ENCODE measurements at regions of chr3 and their contacts with region 1.

Region 1: DNA sequence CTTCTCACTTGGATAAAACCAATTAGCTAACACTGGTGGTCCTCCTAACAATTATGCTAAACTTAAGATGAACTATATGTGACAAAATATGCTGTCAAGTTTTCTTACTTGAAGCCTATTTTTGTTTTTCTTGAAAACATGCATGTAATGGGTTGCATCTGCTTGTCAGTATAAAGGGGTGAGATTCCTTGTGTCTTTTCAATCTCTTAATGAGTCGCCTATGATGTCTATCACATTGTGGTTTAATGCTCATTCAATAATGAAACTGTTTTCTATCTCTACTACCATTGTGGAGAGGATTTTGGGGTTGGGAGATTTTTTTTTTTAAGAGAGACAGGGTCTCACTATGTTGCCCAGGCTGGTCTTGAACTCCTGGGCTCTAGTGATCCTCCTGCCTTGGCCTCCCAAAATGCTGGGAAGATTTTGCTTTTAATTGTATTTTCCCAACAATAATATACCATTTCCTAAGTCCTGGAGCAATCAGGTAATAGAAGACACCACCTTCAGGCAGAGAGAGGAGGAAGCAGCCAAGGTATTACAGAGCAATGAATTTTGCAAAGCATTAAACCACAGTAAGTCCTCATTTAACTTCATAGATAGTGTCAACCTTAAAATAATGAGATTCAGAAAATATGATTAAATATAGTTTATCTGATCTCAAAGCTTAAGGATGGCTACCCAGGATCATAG is 17.4 kb upstream of the TRMT10C start:
- DNase-seq: no peak
- H3K4me3 Mint-ChIP-seq: no peak overlapping the region
- H3K27ac Mint-ChIP-seq: peak overlapping the region; percentile 56
- H3K4me1 Mint-ChIP-seq: peaks cover 33% of the 10 kb centered on the region
- H3K27me3 Mint-ChIP-seq: no peaks in the 10 kb centered on the region

Region 2: DNA sequence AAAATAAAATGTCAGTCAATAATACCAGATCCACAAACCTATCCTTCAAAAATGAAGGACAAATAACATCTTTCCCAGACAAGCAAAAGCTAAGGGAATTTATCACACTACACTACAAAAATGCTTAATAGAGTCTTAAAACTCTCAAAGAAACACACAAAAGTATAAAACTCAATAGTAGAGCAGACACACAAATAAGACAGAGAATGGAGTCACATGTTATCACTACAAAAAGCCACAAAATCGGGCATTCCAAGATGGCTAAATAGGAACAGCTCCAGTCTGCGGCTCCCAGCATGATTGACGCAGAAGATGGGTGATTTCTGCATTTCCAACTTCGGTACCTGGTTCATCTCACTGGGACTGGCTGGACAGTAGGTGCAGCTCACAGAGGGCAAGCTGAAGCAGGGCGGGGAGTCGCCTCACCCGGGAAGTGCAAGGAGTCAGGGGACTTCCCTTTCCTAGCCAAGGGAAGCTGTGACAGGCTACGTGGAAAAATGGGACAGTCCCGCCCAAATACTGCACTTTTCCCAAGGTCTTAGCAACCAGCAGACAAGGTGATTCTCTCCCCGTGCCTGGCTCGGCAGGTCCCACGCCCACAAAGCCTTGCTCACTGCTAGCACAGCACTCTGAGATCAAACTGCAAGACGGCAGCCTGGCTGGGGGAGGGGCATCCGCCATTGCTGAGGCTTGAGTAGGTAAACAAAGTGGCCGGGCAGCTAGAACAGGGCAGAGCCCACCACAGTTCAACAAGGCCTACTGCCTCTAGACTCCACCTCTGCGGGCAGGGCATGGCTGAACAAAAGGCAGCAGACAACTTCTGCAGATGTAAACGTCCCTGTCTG is 77.6 kb before region 1 on chr3:
- CTCF ChIA-PET with region 1: no interaction called
- POLR2A ChIA-PET with region 1: no interaction called
- intact Hi-C with region 1: loop called (anchors 5 kb)
- DNase-seq: peak; percentile 86
- H3K4me3 Mint-ChIP-seq: peak overlapping the region; percentile 74
- H3K27ac Mint-ChIP-seq: peak overlapping the region; percentile 84
- H3K4me1 Mint-ChIP-seq: peaks cover 51% of the 10 kb centered on the region
- H3K27me3 Mint-ChIP-seq: no peaks in the 10 kb centered on the region

Region 3: DNA sequence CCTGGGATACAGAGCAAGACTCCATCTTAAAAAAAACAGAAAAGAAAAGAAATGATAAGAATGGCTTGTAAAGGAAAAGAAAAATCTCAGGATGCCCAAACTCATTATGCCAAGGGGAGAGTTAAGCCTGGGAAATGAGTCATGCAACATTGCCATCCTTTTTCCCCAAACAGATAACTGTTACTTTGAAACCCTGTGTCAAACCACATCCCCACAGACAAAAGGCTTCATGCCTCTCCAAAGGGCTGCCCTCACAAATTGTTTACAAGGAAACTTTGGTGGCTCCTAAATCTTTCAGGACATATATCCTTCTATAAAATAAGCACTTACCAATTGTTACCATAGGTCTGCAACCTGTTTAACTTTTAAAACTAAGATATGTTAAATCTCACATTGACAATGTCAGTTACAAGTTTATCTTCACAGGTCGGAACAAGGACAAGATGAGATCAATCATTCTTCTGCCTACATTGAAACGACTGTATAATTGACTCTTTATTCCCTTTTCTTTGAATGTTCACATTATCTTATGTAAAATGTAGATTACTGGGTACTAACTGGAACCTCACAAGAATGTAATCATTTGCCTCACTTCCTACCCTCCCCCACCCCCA is 12.7 kb before region 1 on chr3:
- CTCF ChIA-PET with region 1: no interaction called
- POLR2A ChIA-PET with region 1: no interaction called
- intact Hi-C with region 1: loop called (anchors 1 kb)
- DNase-seq: peak; percentile 16
- H3K4me3 Mint-ChIP-seq: no peak overlapping the region
- H3K27ac Mint-ChIP-seq: peak overlapping the region; percentile 53
- H3K4me1 Mint-ChIP-seq: peaks cover 34% of the 10 kb centered on the region
- H3K27me3 Mint-ChIP-seq: no peaks in the 10 kb centered on the region

Region 4: GRCh38 chr3:101561630-101562328 is 17.5 kb after region 1 on chr3 and contains the start of gene TRMT10C:
- CTCF ChIA-PET with region 1: no interaction called
- POLR2A ChIA-PET with region 1: interaction called, 3 read pairs
- intact Hi-C with region 1: loop called (anchors 1 kb)
- DNase-seq: peak; percentile 96
- H3K4me3 Mint-ChIP-seq: peak within 1 kb of the TSS; percentile 97
- H3K27ac Mint-ChIP-seq: peak within 1 kb of the TSS; percentile 96
- H3K4me1 Mint-ChIP-seq: peaks cover 37% of the 10 kb centered on the region
- H3K27me3 Mint-ChIP-seq: peaks cover 3% of the 10 kb centered on the region
- total RNA-seq, gene TRMT10C: 39.5 to 43.2 TPM